CD4-positive, alpha-beta T cell (primary cell): ENCODE measurements at regions of chr3 and their contacts with region 1.

Region 1: GRCh38 chr3:184185461-184186308 is at the start of gene ABCF3:
- DNase-seq: peak; percentile 98 to 100 (median 99)
- ATAC-seq: peak; percentile 95
- H3K4me3 ChIP-seq: peak within 1 kb of the TSS; percentile 81
- H3K4me3 Mint-ChIP-seq: peak within 1 kb of the TSS; percentile 99
- H3K27ac ChIP-seq: peak within 1 kb of the TSS; percentile 15 to 69
- H3K27ac Mint-ChIP-seq: peak within 1 kb of the TSS; percentile 87
- H3K4me1 ChIP-seq: peaks cover 32% of the 10 kb centered on the region
- H3K4me1 Mint-ChIP-seq: peaks cover 47% of the 10 kb centered on the region
- H3K27me3 ChIP-seq: no peaks in the 10 kb centered on the region
- H3K27me3 Mint-ChIP-seq: no peaks in the 10 kb centered on the region
- CTCF ChIP-seq: no peak
- total RNA-seq, gene ABCF3: 163 to 166 TPM

Region 2: GRCh38 chr3:184135149-184135910 is 50.4 kb before region 1 on chr3 and contains the start of gene EIF2B5:
- CTCF ChIA-PET with region 1: no interaction called
- POLR2A ChIA-PET with region 1: interaction called, 18 read pairs
- intact Hi-C with region 1: loop called (anchors 5 kb)
- DNase-seq: peak; percentile 72 to 95 (median 82)
- ATAC-seq: peak; percentile 88
- H3K4me3 ChIP-seq: peak within 1 kb of the TSS; percentile 99
- H3K4me3 Mint-ChIP-seq: peak within 1 kb of the TSS; percentile 99
- H3K27ac ChIP-seq: peak within 1 kb of the TSS; percentile 71 to 76
- H3K27ac Mint-ChIP-seq: peak within 1 kb of the TSS; percentile 97
- H3K4me1 ChIP-seq: peaks cover 29% of the 10 kb centered on the region
- H3K4me1 Mint-ChIP-seq: peaks cover 50% of the 10 kb centered on the region
- H3K27me3 ChIP-seq: no peaks in the 10 kb centered on the region
- H3K27me3 Mint-ChIP-seq: no peaks in the 10 kb centered on the region
- CTCF ChIP-seq: peak; percentile 31
- total RNA-seq, gene EIF2B5: 53.6 TPM

Region 3: GRCh38 chr3:184168363-184169120 is 17.1 kb before region 1 on chr3:
- CTCF ChIA-PET with region 1: no interaction called
- POLR2A ChIA-PET with region 1: interaction called, 25 read pairs
- intact Hi-C with region 1: loop called in 1 of 2 experiments (anchors 2 kb)
- DNase-seq: no peak
- ATAC-seq: no peak
- H3K4me3 ChIP-seq: no peak overlapping the region
- H3K4me3 Mint-ChIP-seq: no peak overlapping the region
- H3K27ac ChIP-seq: no peak overlapping the region
- H3K27ac Mint-ChIP-seq: no peak overlapping the region
- H3K4me1 ChIP-seq: no peaks in the 10 kb centered on the region
- H3K4me1 Mint-ChIP-seq: no peaks in the 10 kb centered on the region
- H3K27me3 ChIP-seq: no peaks in the 10 kb centered on the region
- H3K27me3 Mint-ChIP-seq: no peaks in the 10 kb centered on the region
- CTCF ChIP-seq: no peak

Region 4: GRCh38 chr3:184314363-184314699 is 128.6 kb after region 1 on chr3 and contains the start of gene EIF4G1:
- CTCF ChIA-PET with region 1: no interaction called
- POLR2A ChIA-PET with region 1: interaction called, 5 read pairs
- intact Hi-C with region 1: loop called in 1 of 2 experiments (anchors 5 kb)
- DNase-seq: peak; percentile 84 to 98 (median 90)
- ATAC-seq: peak; percentile 83
- H3K4me3 ChIP-seq: peak within 1 kb of the TSS; percentile 77
- H3K4me3 Mint-ChIP-seq: peak within 1 kb of the TSS; percentile 94
- H3K27ac ChIP-seq: peak within 1 kb of the TSS; percentile 84 to 95
- H3K27ac Mint-ChIP-seq: peak within 1 kb of the TSS; percentile 95
- H3K4me1 ChIP-seq: peaks cover 38% of the 10 kb centered on the region
- H3K4me1 Mint-ChIP-seq: peaks cover 27% of the 10 kb centered on the region
- H3K27me3 ChIP-seq: no peaks in the 10 kb centered on the region
- H3K27me3 Mint-ChIP-seq: no peaks in the 10 kb centered on the region
- CTCF ChIP-seq: no peak
- total RNA-seq, gene EIF4G1: 211 to 217 TPM

Region 5: DNA sequence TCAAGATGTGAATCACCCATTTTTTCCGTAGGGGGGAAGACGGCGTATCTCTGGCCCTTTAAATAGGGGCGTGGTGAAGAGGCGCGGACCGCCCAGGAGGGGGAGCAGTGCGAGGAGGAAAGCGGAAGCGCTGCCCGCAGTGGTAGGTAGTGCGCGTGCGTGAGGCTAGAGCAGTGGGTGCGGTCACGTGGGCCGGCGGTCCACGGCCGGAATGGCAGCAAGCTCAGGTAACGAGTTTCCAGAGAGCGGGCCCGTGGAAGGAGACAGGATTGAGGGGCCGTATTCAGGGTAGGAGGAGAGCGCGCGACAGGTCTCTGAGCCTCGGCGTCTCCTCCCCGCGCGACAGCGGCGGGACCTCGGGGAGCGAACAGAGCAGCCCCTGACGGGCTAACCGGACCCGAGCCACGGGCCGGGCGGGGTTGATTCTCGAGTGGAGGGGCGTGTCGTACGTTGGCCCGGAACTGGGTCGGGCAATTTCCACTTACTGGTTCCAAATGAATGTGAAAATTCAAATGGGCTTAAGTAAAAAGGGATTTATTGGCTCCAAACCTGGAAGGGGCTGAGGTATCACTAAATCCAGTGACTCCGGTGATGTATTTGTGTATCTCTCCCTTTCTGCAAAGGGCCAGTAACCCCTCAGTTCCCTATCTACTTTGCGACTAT is 626.4 kb after region 1 on chr3 and contains the start of gene VPS8:
- CTCF ChIA-PET with region 1: no interaction called
- POLR2A ChIA-PET with region 1: no interaction called
- intact Hi-C with region 1: loop called in 1 of 2 experiments (anchors 5 kb)
- DNase-seq: peak; percentile 91 to 98 (median 96)
- ATAC-seq: peak; percentile 85
- H3K4me3 ChIP-seq: peak within 1 kb of the TSS; percentile 84
- H3K4me3 Mint-ChIP-seq: peak within 1 kb of the TSS; percentile 95
- H3K27ac ChIP-seq: peak within 1 kb of the TSS; percentile 86 to 87
- H3K27ac Mint-ChIP-seq: peak within 1 kb of the TSS; percentile 90
- H3K4me1 ChIP-seq: peaks cover 28% of the 10 kb centered on the region
- H3K4me1 Mint-ChIP-seq: peaks cover 59% of the 10 kb centered on the region
- H3K27me3 ChIP-seq: no peaks in the 10 kb centered on the region
- H3K27me3 Mint-ChIP-seq: no peaks in the 10 kb centered on the region
- CTCF ChIP-seq: peak; percentile 64
- total RNA-seq, gene VPS8: 56.8 to 61.2 TPM